Aorta (tissue), 5 donors: ENCODE measurements at regions of chr10 and their contacts with region 1.

Region 1: DNA sequence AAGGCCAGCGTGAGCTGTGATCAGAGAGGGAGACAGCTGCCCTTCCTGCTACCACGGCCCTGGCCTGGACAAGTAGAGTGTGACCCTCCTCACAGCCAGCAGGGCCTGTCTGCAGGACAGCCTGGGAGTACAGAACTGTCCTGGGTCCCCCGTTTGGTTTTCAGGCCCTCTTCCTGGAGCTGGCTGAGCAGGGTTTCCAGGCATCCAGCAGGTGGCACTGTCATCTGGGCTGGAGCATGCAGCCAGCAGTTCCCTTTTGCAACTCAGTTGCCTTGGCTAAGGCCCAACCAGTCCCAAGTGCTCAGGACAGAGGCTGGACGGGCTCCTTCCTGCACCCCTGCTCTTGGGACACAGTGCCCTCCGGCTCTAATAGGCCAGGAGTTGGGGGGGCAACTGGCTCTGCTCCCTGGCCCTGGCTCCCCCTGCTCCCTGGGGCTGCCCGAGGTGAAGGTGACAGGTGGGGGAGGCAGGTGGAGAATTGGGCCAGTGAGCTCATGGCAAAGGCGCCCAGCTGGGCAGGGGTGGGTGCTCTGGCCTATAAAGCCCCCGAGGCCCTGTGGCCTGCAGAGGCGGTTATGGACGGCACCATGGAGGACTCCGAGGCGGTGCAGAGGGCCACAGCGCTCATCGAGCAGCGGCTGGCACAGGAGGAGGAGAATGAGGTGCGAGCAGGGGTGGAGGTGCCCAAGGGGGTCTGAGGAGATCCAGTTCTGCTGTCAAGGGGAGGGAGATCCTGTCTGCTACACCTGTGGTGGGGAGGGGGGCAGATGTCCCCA is at the start of gene ANKRD2:
- DNase-seq: peak; percentile 90 to 93
- ATAC-seq: peak; percentile 87
- H3K4me3 ChIP-seq: no peak within 1 kb of the TSS
- H3K27ac ChIP-seq: no peak within 1 kb of the TSS
- H3K4me1 ChIP-seq: no peaks in the 10 kb centered on the region
- H3K27me3 ChIP-seq: no peaks in the 10 kb centered on the region
- total RNA-seq, gene ANKRD2: 0.39 to 0.78 TPM

Region 2: GRCh38 chr10:97138174-97138573 is 434.2 kb before region 1 on chr10:
- intact Hi-C with region 1: no loop called
- DNase-seq: peak in 1 of 2 donors; percentile 46
- ATAC-seq: no peak
- H3K4me3 ChIP-seq: no peak overlapping the region
- H3K27ac ChIP-seq: no peak overlapping the region
- H3K4me1 ChIP-seq: no peaks in the 10 kb centered on the region
- H3K27me3 ChIP-seq: no peaks in the 10 kb centered on the region

Region 3: DNA sequence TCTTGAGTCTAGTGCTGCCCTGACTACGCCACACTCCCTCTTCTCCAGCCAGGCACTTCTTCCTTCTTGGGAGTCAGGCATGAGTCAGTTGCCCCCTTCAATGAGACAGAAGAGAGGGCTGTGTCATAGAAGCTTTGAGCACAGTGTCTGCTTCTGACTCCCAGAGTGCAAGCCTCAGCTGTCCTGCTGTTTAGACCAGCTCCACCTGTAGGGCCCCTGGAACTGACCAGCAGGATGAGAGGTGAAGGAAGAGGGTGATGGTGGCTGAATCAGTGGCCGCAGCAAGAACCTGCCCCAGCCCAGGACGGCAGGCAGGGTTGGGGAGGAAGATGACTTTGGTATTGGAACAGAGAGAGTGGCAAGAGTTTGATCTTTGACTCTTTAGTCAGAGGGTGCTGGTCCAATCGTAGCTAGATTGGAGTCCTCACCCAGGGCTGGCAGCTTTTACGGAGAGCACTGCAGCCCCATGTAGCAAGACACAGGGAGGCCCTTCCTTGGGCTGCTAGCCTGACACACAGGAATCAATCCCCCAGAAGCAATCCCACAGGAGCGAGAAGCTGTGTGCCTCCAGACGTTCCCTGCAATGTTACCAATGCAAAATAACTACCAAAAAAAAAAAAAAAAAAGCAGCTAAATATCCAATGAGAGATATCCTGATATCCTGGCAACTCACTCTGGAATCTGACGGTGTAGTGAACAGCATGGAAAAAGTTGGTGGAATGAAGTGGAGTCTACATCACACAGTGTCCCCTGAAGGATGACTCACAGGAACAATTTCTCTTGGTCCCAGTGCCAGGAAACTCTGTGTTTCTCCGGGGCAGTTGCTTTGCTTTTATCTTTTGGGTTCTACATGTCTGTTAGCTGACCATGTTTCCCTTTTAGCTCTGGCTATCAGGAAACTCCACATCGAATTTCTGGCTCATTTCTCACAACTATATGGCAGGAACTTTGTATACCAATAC is 24.0 kb after region 1 on chr10:
- intact Hi-C with region 1: loop called in 1 of 2 experiments (anchors 1 kb)
- DNase-seq: peak in 1 of 2 donors; percentile 65
- ATAC-seq: peak; percentile 89
- H3K4me3 ChIP-seq: no peak overlapping the region
- H3K27ac ChIP-seq: peak overlapping the region; percentile 79 to 98
- H3K4me1 ChIP-seq: no peaks in the 10 kb centered on the region
- H3K27me3 ChIP-seq: no peaks in the 10 kb centered on the region

Region 4: GRCh38 chr10:97612386-97612785 is 40.0 kb after region 1 on chr10:
- intact Hi-C with region 1: loop called (anchors 1 to 2 kb)
- DNase-seq: no peak
- ATAC-seq: peak; percentile 72
- H3K4me3 ChIP-seq: no peak overlapping the region
- H3K27ac ChIP-seq: no peak overlapping the region
- H3K4me1 ChIP-seq: peaks cover 0 to 6% of the 10 kb centered on the region in 2 donors
- H3K27me3 ChIP-seq: no peaks in the 10 kb centered on the region